ENCODE measurements at regions of chr5 and their contacts with region 1.

Region 1: DNA sequence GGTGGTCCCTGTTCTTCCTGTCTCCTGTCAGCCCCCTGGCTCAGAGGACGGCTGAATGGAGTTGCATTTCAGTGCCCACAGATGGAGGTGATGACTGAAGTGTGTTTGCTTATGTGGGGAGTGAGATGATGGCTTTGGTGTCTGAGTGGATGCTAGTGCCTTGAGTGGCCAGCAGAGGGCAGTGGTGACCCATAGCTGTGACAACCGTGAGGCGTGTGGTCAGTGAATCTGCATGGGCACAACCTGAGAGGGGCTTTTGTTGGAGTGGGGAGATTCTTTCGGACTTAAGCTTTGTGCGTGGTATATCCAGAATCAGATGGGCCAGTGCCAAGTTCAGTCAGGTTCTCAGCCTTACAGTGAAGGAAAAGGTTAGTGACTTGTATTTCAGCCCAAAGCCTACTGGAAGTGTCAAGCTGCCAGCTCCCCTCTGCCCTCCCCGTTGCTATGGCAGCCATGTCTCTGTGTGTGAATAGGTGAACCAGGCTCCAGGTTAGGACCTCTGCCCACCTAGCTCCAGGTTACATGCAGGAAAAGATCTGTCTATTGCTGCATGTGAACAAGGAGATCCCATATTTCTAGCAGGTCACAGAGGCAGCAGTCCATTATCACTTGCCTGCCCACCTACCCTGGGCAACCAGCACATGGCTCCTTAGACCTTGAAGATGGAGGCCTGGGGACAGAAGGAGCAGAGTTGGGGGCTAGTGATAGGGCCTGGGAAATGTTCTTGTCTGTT is 14.7 kb upstream of the CXXC5 start:
- DNase-seq: peak; percentile 75
- CTCF ChIP-seq: peak; percentile 99

Region 2: DNA sequence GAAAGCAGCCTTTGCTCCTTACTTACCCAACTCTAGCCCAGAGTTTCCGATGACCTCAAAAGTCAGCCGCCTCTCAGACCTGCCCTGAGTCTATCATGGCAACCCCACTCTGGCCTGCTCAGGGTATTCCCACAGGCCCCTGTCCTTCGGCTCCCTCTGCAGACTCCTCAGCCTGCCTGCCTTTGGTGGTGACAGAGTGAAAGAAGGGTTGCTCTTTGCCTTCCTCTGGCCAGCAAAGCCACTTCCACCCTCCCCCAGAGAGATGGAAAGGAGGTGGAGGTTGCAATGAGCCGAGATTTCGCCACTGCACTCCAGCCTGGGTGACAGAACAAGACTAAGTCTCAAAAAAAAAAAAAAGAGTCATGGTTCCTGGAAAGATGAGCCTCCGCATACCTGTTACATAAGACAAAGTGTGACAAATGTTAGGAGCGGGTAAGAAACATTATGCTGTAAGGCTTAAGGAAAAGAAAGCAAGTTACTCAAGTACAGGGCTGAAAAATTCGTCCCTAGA is 165.0 kb before region 1 on chr5:
- CTCF ChIA-PET with region 1: no interaction called
- POLR2A ChIA-PET with region 1: no interaction called
- DNase-seq: no peak
- CTCF ChIP-seq: peak; percentile 3

Region 3: DNA sequence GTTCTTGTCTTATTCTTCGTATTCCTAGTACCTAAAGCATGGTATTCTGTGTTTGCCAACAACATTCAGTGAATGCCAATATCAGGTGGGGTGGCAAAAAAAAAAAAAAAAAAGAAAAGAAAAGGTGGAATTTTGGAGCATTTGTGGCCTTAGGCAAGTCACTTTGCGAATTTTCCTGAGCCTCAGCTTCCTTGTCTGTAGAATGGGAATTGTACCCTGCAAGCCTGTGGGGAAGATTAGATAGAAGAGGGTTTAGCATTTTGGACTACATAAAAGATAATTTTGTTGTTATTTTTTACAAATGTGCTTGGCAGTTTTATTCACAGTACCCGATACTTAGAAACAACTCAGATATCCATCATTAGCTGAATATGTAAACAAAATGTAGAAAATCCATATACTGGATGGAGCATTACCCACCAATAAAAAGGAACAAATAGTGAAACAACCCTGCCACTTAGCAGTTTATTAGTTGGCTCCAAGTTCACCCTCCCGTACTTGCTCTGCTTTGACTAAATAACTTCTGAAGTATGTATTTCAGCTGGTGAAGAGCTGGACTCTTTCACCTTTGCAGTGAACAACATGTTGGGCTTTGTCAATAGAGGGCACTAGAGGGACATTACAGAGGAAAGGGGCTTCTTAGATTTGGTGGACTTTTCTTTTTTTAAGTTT is 58.7 kb before region 1 on chr5:
- CTCF ChIA-PET with region 1: interaction called, 27 read pairs
- POLR2A ChIA-PET with region 1: no interaction called
- DNase-seq: no peak
- CTCF ChIP-seq: peak; percentile 70

Region 4: GRCh38 chr5:139611703-139612584 is 21.5 kb before region 1 on chr5:
- CTCF ChIA-PET with region 1: interaction called, 39 read pairs
- POLR2A ChIA-PET with region 1: interaction called, 9 read pairs
- DNase-seq: no peak
- CTCF ChIP-seq: no peak

Region 5: GRCh38 chr5:139660923-139661814 is 27.7 kb after region 1 on chr5:
- CTCF ChIA-PET with region 1: interaction called, 229 read pairs
- POLR2A ChIA-PET with region 1: interaction called, 6 read pairs
- DNase-seq: peak; percentile 60
- CTCF ChIP-seq: no peak

Region 6: DNA sequence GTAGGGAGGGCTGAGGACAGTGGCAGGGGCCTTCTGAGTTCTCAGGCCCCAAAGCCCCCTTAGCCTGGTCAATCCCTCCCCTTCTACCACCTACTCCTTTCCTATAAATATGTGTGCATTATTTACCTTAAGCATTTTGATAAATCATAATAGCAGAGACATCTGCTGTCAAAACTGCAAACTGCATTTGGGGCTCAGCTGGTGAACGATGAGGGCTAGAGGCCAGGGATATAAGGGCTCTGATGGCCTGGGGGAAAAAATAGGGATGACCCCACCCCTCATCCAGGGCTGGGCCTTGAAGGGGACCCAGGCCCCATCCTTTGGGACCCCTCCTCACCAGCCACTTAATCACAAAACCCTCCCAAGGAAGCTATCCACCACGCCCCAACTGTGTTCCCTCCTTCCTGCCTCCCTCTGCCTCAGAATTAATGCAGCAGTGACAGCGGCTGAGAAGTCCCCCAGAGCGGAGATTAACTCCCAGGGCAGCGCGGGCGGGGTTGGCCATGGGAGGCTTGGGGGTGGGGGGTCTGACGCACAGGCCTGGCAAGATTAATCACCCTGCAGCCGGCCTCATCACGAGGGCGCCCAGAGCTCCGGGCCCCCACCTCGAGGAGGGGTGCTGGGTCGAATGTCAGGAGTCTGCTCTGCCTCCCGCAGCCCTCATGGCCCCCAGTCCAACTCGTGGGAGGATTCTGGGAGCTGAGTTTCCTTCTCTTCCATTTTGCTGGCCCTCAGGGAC is 56.8 kb after region 1 on chr5:
- CTCF ChIA-PET with region 1: interaction called, 288 read pairs
- POLR2A ChIA-PET with region 1: interaction called, 12 read pairs
- DNase-seq: peak; percentile 62
- CTCF ChIP-seq: peak; percentile 85

Region 7: GRCh38 chr5:139740138-139740991 is 106.9 kb after region 1 on chr5:
- CTCF ChIA-PET with region 1: interaction called, 22 read pairs
- POLR2A ChIA-PET with region 1: no interaction called
- DNase-seq: peak; percentile 60
- CTCF ChIP-seq: no peak

Region 8: GRCh38 chr5:139765409-139766217 is 132.2 kb after region 1 on chr5:
- CTCF ChIA-PET with region 1: interaction called, 439 read pairs
- POLR2A ChIA-PET with region 1: no interaction called
- DNase-seq: peak; percentile 87
- CTCF ChIP-seq: peak; percentile 95